ENCODE measurements at regions of chr3 and their contacts with region 1.

Region 1: DNA sequence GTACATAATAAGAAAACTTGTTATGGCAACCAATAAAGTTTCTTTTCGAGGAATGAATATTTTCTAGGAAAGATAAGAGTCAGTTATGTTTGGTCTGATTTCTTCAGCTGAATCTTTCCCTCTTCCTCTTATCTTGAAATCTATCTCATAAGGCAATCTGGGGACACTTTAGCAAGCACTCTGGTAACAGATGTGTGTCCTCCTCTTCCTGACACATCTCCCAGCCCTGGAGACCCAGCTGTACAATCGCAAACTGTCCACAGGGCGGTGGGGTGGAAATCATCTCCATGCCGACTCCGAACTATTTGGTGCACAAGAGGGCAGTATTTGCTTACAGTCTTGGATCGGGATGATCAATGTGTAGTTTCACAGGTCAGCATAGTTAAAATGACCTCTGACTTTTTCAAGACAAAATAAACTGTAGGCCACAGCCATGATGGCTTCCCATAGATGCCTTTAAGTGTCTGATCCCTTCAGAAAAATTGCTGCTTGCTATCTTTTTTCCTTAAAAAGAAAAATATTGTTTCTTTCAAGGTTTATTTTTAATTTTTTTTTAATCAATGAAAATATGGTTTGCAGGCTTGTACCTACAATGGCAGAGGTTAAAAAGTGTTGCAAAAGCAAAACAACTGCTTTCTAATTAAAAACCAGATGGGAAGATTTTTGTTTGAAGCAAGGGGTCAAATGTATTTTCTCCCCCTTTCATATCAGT is 17.7 kb downstream of the EEFSEC start:
- DNase-seq: peak; percentile 83
- ATAC-seq: peak; percentile 93
- H3K4me3 ChIP-seq: no peak overlapping the region
- H3K27ac ChIP-seq: no peak overlapping the region
- H3K4me1 ChIP-seq: peaks cover 2% of the 10 kb centered on the region; the same call in 1 of the 2 replicates
- H3K27me3 ChIP-seq: no peaks in the 10 kb centered on the region
- CTCF ChIP-seq: peak; percentile 99
- POLR2A ChIP-seq: no peak
- RAD21 ChIP-seq: peak; percentile 94

Region 2: GRCh38 chr3:127997961-127998360 is 173.0 kb before region 1 on chr3:
- CTCF ChIA-PET with region 1: no interaction called
- POLR2A ChIA-PET with region 1: no interaction called
- dilution Hi-C with region 1: no loop called
- in situ Hi-C with region 1: no loop called
- intact Hi-C with region 1: no loop called
- DNase-seq: no peak
- ATAC-seq: no peak
- H3K4me3 ChIP-seq: no peak overlapping the region
- H3K27ac ChIP-seq: no peak overlapping the region
- H3K4me1 ChIP-seq: no peaks in the 10 kb centered on the region
- H3K27me3 ChIP-seq: peaks cover 34% of the 10 kb centered on the region
- CTCF ChIP-seq: no peak
- POLR2A ChIP-seq: no peak
- RAD21 ChIP-seq: no peak

Region 3: GRCh38 chr3:128426128-128426921 is 255.4 kb after region 1 on chr3:
- CTCF ChIA-PET with region 1: no interaction called
- POLR2A ChIA-PET with region 1: no interaction called
- dilution Hi-C with region 1: no loop called
- in situ Hi-C with region 1: no loop called
- intact Hi-C with region 1: loop called (anchors 5 kb)
- DNase-seq: no peak
- ATAC-seq: peak; percentile 98
- H3K4me3 ChIP-seq: no peak overlapping the region
- H3K27ac ChIP-seq: no peak overlapping the region
- H3K4me1 ChIP-seq: no peaks in the 10 kb centered on the region; the same call in 1 of the 2 replicates
- H3K27me3 ChIP-seq: peaks cover 22% of the 10 kb centered on the region
- CTCF ChIP-seq: peak; percentile 94
- POLR2A ChIP-seq: no peak
- RAD21 ChIP-seq: peak; percentile 94

Region 4: GRCh38 chr3:128497387-128498126 is 326.6 kb after region 1 on chr3:
- CTCF ChIA-PET with region 1: interaction called, 3 read pairs
- POLR2A ChIA-PET with region 1: no interaction called
- dilution Hi-C with region 1: no loop called
- in situ Hi-C with region 1: no loop called
- intact Hi-C with region 1: loop called (anchors 1 kb)
- DNase-seq: no peak
- ATAC-seq: peak; percentile 69
- H3K4me3 ChIP-seq: peak overlapping the region; percentile 57
- H3K27ac ChIP-seq: no peak overlapping the region
- H3K4me1 ChIP-seq: peaks cover 5% of the 10 kb centered on the region
- H3K27me3 ChIP-seq: peaks cover 34% of the 10 kb centered on the region
- CTCF ChIP-seq: peak; percentile 54
- POLR2A ChIP-seq: no peak
- RAD21 ChIP-seq: peak; percentile 57

Region 5: DNA sequence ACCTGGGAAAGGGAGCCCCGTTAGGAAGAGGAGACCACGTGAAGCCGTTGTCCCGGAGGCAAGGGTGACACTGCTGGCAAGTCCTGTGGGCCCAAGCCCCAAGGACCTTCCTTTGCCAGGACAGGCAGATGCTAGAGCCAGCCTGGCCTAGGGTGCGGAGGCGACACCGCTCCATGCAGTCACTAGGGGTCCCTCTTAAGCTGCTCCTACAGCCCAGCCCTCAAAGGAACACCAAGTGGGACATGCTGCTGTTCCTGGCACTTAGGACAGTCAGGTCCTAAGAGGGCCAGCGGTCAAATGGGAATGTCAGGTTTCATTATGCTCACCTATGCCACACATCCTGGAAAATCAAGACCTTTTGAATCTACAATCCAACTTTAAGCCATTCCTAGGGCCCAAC is 420.0 kb after region 1 on chr3:
- CTCF ChIA-PET with region 1: no interaction called
- POLR2A ChIA-PET with region 1: no interaction called
- dilution Hi-C with region 1: no loop called
- in situ Hi-C with region 1: loop called (anchors 10 kb)
- intact Hi-C with region 1: no loop called
- DNase-seq: no peak
- ATAC-seq: no peak
- H3K4me3 ChIP-seq: no peak overlapping the region
- H3K27ac ChIP-seq: no peak overlapping the region
- H3K4me1 ChIP-seq: no peaks in the 10 kb centered on the region
- H3K27me3 ChIP-seq: peaks cover 3% of the 10 kb centered on the region
- CTCF ChIP-seq: 0 out of 2 replicates have a peak, but pooled peaks have one; percentile 2
- POLR2A ChIP-seq: no peak
- RAD21 ChIP-seq: no peak